ENCODE measurements at regions of chr1 and their contacts with region 1.

Region 1: GRCh38 chr1:160098852-160099561 is 588 bp upstream of the IGSF8 start:
- DNase-seq: peak; percentile 92
- H3K4me3 Mint-ChIP-seq: peak overlapping the region; percentile 71
- H3K27ac Mint-ChIP-seq: peak overlapping the region; percentile 71
- H3K4me1 Mint-ChIP-seq: peaks cover 24% of the 10 kb centered on the region
- H3K27me3 Mint-ChIP-seq: no peaks in the 10 kb centered on the region

Region 2: GRCh38 chr1:159804924-159805323 is 294.1 kb before region 1 on chr1:
- intact Hi-C with region 1: no loop called
- DNase-seq: no peak
- H3K4me3 Mint-ChIP-seq: no peak overlapping the region
- H3K27ac Mint-ChIP-seq: no peak overlapping the region
- H3K4me1 Mint-ChIP-seq: peaks cover 8% of the 10 kb centered on the region
- H3K27me3 Mint-ChIP-seq: peaks cover 52% of the 10 kb centered on the region

Region 3: DNA sequence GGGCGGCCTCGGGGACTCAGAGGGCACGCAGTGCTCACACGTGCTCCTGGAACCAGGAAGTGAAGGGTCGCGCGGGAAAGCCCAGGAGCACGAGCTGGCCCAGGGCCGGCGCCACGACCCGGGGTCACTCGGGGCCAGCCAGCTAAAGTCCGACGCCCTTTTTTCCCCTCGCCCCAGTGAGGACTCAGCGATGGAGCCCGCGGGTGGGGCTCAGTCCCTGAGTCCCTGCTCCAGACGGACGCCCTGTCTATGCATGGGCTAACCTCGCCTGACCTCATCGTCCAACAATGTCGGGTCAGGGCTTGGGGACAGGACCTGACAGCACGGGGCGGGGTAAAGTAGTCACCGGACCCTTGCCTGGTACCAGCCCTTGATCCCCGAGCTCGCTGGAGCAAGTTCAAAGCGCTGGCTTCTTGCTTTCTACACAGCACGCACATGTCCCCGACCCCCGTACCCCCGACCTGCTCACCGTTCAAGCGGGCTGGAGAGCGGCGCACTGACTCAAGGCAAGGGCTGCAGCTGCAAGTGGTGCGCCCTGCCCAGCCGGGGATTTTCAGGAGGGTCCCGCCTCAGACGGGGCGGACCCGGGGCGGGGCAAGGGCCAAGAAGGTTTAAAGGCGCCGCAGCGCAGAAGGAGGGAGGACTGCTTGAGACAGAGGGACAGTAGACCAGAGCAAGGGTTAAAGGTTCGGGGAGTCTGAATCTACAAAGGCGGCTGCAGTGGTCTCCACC is 173.9 kb before region 1 on chr1 and contains the start of gene TAGLN2:
- intact Hi-C with region 1: loop called (anchors 1 kb)
- DNase-seq: peak; percentile 86
- H3K4me3 Mint-ChIP-seq: peak within 1 kb of the TSS; percentile 95
- H3K27ac Mint-ChIP-seq: peak within 1 kb of the TSS; percentile 98
- H3K4me1 Mint-ChIP-seq: peaks cover 36% of the 10 kb centered on the region
- H3K27me3 Mint-ChIP-seq: no peaks in the 10 kb centered on the region
- total RNA-seq, gene TAGLN2: 558 and 578 TPM in 2 replicates

Region 4: DNA sequence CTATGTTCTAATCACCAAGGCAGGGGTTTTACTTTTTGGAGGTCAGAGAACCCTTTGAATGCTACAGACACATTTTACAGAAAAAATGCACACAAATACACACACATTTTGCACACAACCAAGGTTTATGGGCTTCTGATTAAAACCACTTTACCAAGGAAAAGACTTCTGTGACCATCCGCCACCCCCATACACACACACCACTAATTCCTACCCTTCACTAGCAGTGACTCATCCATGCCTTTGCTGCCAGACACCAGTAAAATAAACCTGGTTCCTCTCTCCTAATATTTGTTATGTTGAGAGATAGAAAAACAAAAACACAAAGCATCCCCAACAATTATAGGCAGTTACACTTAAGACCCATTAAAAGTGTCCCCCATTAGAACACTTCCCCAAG is 80.1 kb before region 1 on chr1:
- intact Hi-C with region 1: no loop called
- DNase-seq: no peak
- H3K4me3 Mint-ChIP-seq: peak overlapping the region; percentile 3
- H3K27ac Mint-ChIP-seq: peak overlapping the region; percentile 81
- H3K4me1 Mint-ChIP-seq: peaks cover 35% of the 10 kb centered on the region
- H3K27me3 Mint-ChIP-seq: no peaks in the 10 kb centered on the region

Region 5: DNA sequence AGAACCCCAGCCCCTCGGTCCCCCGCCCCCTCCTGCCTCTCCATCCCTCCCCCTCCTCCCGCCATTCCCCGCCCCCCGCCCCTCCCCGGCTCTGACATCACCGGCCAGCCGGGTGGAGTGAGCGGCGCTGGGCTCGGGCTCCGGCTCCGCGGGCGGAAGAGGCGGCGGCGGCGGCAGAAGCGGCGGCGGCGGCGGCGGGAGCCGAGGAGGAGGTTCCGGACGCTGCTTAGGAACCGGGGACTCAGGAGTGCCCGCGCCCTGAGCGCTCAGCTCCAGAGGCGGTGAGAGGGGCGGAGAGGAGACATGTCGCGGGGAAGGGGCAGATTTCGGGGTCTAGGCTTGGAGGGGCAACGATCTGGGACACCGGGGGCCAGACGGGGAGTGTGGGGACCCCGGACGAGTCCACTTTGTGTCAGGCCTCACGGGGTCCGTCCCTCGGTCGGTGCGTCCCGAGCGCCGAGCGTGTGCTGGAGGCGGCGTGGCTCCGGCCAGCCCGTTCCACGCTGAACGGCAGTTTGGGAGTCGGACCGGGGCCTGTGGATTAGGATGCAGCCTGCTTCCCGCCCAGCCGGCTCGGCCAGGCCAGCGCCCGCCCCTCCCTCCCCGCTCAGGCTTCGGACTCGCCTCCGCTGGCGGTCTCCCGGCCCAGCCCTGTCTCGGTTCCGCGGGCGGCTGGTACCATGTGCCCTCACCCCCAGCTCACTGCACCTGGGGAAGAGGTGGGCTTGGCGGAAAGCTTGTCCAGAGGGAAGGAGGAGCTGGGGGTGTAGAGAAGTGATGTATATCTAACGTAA is 106.4 kb after region 1 on chr1 and contains the start of gene PEA15:
- intact Hi-C with region 1: loop called (anchors 2 kb)
- DNase-seq: peak; percentile 58
- H3K4me3 Mint-ChIP-seq: peak within 1 kb of the TSS; percentile 88
- H3K27ac Mint-ChIP-seq: peak within 1 kb of the TSS; percentile 86
- H3K4me1 Mint-ChIP-seq: peaks cover 38% of the 10 kb centered on the region
- H3K27me3 Mint-ChIP-seq: no peaks in the 10 kb centered on the region
- total RNA-seq, gene PEA15: 61.0 and 61.7 TPM in 2 replicates

Region 6: GRCh38 chr1:160251687-160252526 is 152.9 kb after region 1 on chr1:
- intact Hi-C with region 1: loop called (anchors 2 kb)
- DNase-seq: peak; percentile 22
- H3K4me3 Mint-ChIP-seq: no peak overlapping the region
- H3K27ac Mint-ChIP-seq: no peak overlapping the region
- H3K4me1 Mint-ChIP-seq: peaks cover 17% of the 10 kb centered on the region
- H3K27me3 Mint-ChIP-seq: no peaks in the 10 kb centered on the region

Region 7: GRCh38 chr1:160261893-160262794 is 163.1 kb after region 1 on chr1 and contains the start of gene DCAF8:
- intact Hi-C with region 1: loop called (anchors 2 kb)
- DNase-seq: peak; percentile 98
- H3K4me3 Mint-ChIP-seq: peak within 1 kb of the TSS; percentile 98
- H3K27ac Mint-ChIP-seq: peak within 1 kb of the TSS; percentile 99
- H3K4me1 Mint-ChIP-seq: peaks cover 36% of the 10 kb centered on the region
- H3K27me3 Mint-ChIP-seq: no peaks in the 10 kb centered on the region
- total RNA-seq, gene DCAF8: 132 and 143 TPM in 2 replicates

Region 8: GRCh38 chr1:160291248-160292220 is 192.5 kb after region 1 on chr1:
- intact Hi-C with region 1: loop called (anchors 2 kb)
- DNase-seq: peak; percentile 58
- H3K4me3 Mint-ChIP-seq: no peak overlapping the region
- H3K27ac Mint-ChIP-seq: no peak overlapping the region
- H3K4me1 Mint-ChIP-seq: no peaks in the 10 kb centered on the region
- H3K27me3 Mint-ChIP-seq: no peaks in the 10 kb centered on the region

Region 9: GRCh38 chr1:160376525-160377131 is 277.6 kb after region 1 on chr1:
- intact Hi-C with region 1: loop called (anchors 1 kb)
- DNase-seq: no peak
- H3K4me3 Mint-ChIP-seq: no peak overlapping the region
- H3K27ac Mint-ChIP-seq: no peak overlapping the region
- H3K4me1 Mint-ChIP-seq: peaks cover 10% of the 10 kb centered on the region
- H3K27me3 Mint-ChIP-seq: no peaks in the 10 kb centered on the region